ENCODE measurements at regions of chr15 and their contacts with region 1.

Region 1: GRCh38 chr15:75532413-75533147 is 46.5 kb downstream of the PTPN9 start:
- DNase-seq: peak; percentile 88
- ATAC-seq: peak; percentile 90
- H3K4me3 ChIP-seq: no peak overlapping the region
- H3K27ac ChIP-seq: no peak overlapping the region
- H3K4me1 ChIP-seq: peaks cover 7% of the 10 kb centered on the region
- H3K27me3 ChIP-seq: no peaks in the 10 kb centered on the region
- CTCF ChIP-seq: peak; percentile 23; the same call in 1 of the 2 replicates
- POLR2A ChIP-seq: no peak
- RAD21 ChIP-seq: no peak

Region 2: GRCh38 chr15:75639709-75640482 is 107.3 kb after region 1 on chr15 and contains the start of gene IMP3:
- CTCF ChIA-PET with region 1: interaction called, 10 read pairs
- POLR2A ChIA-PET with region 1: no interaction called
- dilution Hi-C with region 1: no loop called
- in situ Hi-C with region 1: no loop called
- intact Hi-C with region 1: no loop called
- DNase-seq: peak; percentile 95
- ATAC-seq: peak; percentile 96
- H3K4me3 ChIP-seq: peak within 1 kb of the TSS; percentile 77
- H3K27ac ChIP-seq: peak within 1 kb of the TSS; percentile 92
- H3K4me1 ChIP-seq: peaks cover 4% of the 10 kb centered on the region; the same call in 1 of the 2 replicates
- H3K27me3 ChIP-seq: no peaks in the 10 kb centered on the region
- CTCF ChIP-seq: no peak
- POLR2A ChIP-seq: peak; percentile 94
- RAD21 ChIP-seq: no peak
- total RNA-seq, gene IMP3: 42.1 and 84.7 TPM in 2 replicates

Measured in IMR-90 (cell line).